ENCODE measurements at regions of chr18 and their contacts with region 1.

Region 1: GRCh38 chr18:24138789-24139616 is at the start of gene CABYR:
- DNase-seq: peak; percentile 83
- H3K4me3 ChIP-seq: peak within 1 kb of the TSS; percentile 62 to 75 (median 69)
- H3K27ac ChIP-seq: peak within 1 kb of the TSS; percentile 36
- H3K4me1 ChIP-seq: peaks cover 4% of the 10 kb centered on the region
- H3K27me3 ChIP-seq: no peaks in the 10 kb centered on the region
- CTCF ChIP-seq: no peak
- POLR2A ChIP-seq: peak; percentile 94
- total RNA-seq, gene CABYR: 8.9 and 11.4 TPM in 2 replicates

Region 2: GRCh38 chr18:24153397-24153796 is 14.4 kb after region 1 on chr18:
- CTCF ChIA-PET with region 1: interaction called, 4 read pairs
- POLR2A ChIA-PET with region 1: interaction called, 11 read pairs
- dilution Hi-C with region 1: no loop called
- intact Hi-C with region 1: no loop called
- DNase-seq: no peak
- H3K4me3 ChIP-seq: no peak overlapping the region
- H3K27ac ChIP-seq: no peak overlapping the region
- H3K4me1 ChIP-seq: no peaks in the 10 kb centered on the region
- H3K27me3 ChIP-seq: no peaks in the 10 kb centered on the region
- CTCF ChIP-seq: no peak
- POLR2A ChIP-seq: no peak